Right ventricle myocardium inferior (tissue), 1 donor: ENCODE measurements at regions of chr1 and their contacts with region 1.

Region 1: DNA sequence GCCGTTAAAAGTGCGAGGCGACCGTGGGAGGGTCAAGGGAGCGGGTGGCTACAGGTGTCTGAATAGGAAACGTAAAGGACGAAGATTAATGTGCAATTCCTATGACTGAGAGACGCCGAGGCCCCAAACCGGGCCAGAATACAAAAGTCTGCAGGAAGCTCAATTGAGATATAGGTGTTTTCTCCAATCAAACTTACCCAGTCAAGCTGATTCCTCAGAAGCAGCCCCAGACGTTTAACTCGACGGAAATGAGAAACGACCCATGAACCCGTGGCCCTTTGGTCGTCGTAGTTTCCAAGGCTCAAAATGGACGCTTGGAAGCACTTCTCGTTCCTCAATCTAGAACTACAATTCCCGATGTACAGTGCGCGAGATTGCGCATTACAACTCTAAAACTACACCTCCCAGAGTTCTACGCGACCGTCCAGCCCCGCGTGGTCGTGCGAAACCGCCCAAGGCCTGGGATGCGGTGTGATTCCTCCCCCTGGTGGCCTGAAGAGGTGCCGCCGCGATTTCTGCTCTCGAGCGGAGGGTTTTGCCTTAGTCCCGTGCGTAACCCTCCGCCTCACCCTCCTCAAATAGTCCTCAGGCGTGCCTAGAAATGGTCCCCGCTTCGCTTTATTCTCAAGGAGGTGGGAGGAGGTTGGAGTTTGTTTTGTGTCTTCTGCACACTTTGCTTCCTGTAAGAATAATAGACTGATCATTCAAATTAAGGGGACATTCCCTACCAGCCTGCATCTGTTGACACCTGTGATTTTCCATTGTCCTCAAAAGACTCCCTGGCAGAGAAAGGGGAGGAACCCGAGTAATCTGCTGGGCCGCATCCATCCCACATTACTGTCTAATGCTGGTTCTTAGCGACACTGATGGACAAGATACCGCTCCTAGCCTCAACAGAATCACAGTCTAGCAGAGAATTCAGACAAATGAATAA is at the start of gene PAFAH2:
- DNase-seq: peak; percentile 99
- ATAC-seq: peak; percentile 100
- total RNA-seq, gene PAFAH2: 9.7 TPM

Region 2: DNA sequence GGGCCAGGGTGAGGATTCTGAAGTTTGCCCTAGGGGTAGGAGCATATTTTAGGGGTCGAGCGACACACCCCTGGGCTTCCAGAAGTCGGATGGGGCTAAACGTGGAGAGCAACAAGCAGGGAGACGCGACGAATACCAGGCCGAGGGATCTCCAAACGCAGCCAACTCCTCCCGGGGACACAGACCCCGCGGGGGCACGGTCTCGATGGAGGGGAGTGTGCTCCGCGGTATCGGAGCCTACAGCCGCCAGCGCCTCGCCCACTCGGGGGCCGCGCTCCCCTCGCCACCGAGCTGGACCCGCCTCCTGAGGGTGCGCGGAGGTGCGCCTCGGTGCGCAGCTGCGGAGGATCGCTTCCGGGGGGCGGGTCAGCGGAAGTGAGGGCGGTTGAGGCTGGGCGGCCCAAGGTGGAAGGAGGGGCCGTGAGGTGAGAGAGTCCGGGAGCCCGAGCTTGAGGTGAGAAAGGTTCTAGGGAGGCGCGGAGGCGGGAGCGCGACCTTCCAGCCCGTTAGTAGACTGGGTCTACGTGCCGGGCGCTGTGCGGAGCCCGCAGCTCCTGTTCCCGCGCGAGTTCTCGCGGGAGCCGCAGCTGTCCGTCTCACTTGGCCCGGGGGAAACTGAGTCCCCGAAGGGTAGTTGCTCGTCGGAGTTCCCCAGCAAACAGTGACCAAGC is 178.4 kb before region 1 on chr1 and contains the start of gene MTFR1L:
- intact Hi-C with region 1: loop called (anchors 5 kb)
- DNase-seq: peak; percentile 95
- ATAC-seq: peak; percentile 92
- total RNA-seq, gene MTFR1L: 206 TPM

Region 3: DNA sequence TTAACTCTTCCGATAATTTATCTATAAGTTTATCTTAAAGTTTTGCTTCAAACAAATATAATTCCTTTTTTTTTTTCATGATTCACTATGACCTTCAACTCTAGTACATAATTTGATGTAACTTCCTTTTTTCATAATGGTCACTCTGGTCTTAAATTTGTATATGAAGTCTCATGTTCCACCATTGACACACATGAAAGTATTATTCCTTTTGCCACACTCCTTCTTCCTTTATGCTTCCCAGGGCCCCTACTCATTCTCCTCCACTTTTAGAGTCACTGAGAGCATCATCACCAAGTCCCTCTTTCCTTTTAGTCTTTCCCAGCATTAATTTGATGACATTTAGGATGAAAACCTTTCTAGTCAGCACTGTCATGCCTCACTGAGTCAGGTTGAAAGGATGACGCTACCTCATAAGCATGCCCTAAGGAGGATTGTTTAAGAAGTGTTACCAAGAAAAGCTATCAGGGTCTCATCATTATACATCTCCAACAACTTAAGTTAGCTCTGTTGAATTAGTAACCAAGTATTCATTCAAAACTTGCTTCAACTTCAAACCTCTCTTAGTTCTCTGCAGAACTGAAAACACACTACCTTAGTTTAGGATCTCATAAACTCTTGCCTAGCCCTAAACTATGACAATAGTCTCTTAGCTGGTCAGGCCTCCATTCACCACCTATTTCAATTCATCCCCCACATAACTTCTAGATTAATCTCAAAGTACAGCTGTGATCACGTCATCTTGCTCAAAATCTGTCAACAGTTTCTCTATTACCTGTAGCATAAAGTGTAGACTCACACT is 153.4 kb before region 1 on chr1:
- intact Hi-C with region 1: loop called (anchors 5 kb)
- DNase-seq: no peak
- ATAC-seq: no peak

Region 4: GRCh38 chr1:25895365-25895993 is 102.6 kb before region 1 on chr1:
- intact Hi-C with region 1: loop called (anchors 1 kb)
- DNase-seq: peak; percentile 94
- ATAC-seq: peak; percentile 97

Region 5: DNA sequence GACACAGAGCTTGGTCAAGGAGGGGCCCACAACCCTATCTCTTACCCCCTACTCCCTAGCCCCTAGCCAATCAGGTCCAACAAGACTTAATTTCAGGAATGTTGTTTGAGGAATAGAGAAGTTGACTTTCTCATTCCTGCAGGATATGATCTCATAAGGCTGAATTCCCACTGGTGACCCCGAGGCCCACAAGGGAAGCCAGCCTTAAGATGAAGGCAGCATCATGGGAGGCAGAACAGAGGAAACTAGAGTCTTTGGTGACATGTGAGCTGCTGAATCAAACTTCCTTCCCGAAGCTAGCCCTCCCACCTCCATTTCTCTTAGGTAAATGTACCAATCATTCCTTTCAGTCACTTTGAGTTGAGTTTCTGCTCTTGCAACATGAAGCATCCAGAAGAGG is 104.4 kb after region 1 on chr1:
- intact Hi-C with region 1: no loop called
- DNase-seq: no peak
- ATAC-seq: no peak

Region 6: GRCh38 chr1:26321315-26322041 is 323.4 kb after region 1 on chr1:
- intact Hi-C with region 1: no loop called
- DNase-seq: peak; percentile 97
- ATAC-seq: peak; percentile 93

Region 7: DNA sequence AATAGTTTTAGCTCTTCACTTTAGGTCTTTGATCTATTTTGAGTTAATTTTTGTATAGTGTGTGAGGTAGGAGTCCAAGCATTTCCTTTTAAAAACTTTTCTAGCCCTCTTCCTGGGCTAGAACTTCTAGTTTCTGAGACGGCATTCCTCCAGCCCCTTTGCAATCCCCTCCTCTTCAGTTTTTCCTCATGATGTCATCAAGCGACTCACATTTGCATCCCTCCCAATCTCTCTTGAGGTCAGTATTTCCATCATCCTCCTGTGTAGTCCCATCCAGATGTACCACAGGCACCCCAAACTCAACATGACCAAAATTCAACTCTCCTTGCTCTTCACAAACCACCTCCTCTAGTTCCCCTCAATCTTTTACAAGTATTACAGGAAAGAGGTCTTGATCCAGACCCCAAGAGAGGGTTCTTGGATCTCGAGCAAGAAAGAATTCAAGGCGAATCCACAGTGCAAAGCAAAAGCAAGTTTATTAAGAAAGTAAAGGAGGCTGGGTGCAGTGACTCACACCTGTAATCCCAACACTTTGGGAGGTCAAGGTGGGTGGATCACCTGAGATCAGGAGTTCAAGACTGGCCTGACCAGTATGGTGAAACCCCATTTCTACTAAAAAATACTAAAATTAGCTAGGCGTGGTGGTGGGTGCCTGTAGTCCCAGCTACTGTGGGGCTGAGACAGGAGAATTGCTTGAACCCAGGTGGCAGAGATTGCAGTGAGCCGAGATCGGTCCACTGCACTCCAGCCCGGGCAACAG is 485.0 kb after region 1 on chr1:
- intact Hi-C with region 1: no loop called
- DNase-seq: no peak
- ATAC-seq: no peak